Activated B cell treated with CpG ODN at 0.5 μM for 24 hours (primary cell): ENCODE measurements at regions of chr17 and their contacts with region 1.

Region 1: GRCh38 chr17:42536048-42536371 is at the start of gene NAGLU:
- DNase-seq: peak; percentile 95
- ATAC-seq: peak; percentile 94
- H3K4me3 Mint-ChIP-seq: peak within 1 kb of the TSS; percentile 89
- H3K27ac Mint-ChIP-seq: peak within 1 kb of the TSS; percentile 83
- H3K4me1 Mint-ChIP-seq: peaks cover 34% of the 10 kb centered on the region
- H3K27me3 Mint-ChIP-seq: no peaks in the 10 kb centered on the region
- CTCF ChIP-seq: no peak
- total RNA-seq, gene NAGLU: 27.8 and 33.9 TPM in 2 replicates

Region 2: GRCh38 chr17:42566883-42567573 is 31.0 kb after region 1 on chr17 and contains the start of gene MLX:
- CTCF ChIA-PET with region 1: no interaction called
- POLR2A ChIA-PET with region 1: interaction called, 17 read pairs
- intact Hi-C with region 1: loop called (anchors 1 kb)
- DNase-seq: peak; percentile 90
- ATAC-seq: peak; percentile 83
- H3K4me3 Mint-ChIP-seq: peak within 1 kb of the TSS; percentile 98
- H3K27ac Mint-ChIP-seq: peak within 1 kb of the TSS; percentile 95
- H3K4me1 Mint-ChIP-seq: peaks cover 35% of the 10 kb centered on the region
- H3K27me3 Mint-ChIP-seq: no peaks in the 10 kb centered on the region
- CTCF ChIP-seq: no peak
- total RNA-seq, gene MLX: 53.4 and 59.7 TPM in 2 replicates